ENCODE measurements at regions of chr9 and their contacts with region 1.

Region 1: DNA sequence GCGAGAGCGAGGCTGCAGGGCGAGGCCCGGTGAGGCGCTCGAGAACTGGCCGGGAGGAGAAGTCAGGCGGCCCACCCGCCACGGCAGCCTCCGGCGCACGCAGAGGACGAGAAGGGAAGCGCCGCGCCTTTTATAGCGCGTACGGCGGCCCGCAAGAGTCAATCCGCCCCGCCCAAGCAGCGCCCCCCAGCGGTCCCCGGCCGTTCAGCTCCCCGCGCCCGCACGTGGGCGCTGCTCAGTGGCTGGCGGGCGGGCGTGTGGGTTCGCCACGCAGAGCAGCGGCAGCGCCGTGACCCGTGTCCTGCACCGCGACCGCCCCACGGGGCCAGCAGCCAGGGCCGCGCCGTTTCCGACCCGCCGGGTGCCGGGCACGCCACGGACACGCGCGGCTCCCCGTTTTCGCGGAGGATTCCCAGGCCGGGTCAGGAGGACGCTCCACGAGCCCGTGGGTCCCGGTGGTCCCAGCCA is 14.6 kb downstream of the LCN10 start:
- DNase-seq: peak; percentile 80
- ATAC-seq: peak; percentile 6
- H3K4me3 Mint-ChIP-seq: peak overlapping the region; percentile 99; the same call in 1 of the 2 replicates
- H3K27ac Mint-ChIP-seq: no peak overlapping the region
- H3K4me1 Mint-ChIP-seq: peaks cover 21% of the 10 kb centered on the region
- H3K27me3 Mint-ChIP-seq: no peaks in the 10 kb centered on the region
- CTCF ChIP-seq: peak; percentile 84

Region 2: DNA sequence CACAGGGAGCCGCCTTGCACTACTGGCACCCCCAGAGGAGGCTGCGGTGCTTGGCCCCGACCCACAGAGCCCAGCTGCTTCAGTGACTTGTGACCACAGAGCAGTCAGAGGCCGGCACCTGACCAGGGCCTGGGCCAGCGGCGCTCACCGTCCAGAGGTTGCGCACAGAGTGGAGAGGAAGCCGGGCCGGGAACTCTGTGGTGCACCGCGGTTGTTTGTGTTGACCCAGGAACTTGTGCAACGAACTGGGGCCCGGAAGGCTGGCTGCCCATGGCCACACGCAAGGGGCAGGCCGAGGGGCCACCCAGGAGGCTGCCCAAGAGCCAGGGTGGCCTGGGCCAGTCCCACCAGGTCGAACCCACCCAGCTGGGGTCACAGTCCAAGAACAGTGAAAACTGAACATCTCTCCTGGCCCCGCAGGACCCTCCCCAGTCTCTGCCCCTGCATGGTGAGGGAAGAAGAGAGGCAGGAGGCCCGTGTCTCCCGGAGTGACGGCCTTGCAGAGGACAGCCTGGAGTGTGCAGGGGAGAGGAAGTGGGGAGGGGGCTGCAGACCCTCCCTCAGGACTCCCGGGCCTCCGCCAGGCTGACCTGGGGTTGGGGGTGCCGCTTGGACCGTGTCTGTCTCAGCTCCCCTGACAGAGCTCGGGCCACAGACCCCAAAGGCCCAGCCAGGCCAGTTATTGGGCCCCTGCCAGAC is 108.2 kb before region 1 on chr9:
- CTCF ChIA-PET with region 1: no interaction called
- POLR2A ChIA-PET with region 1: no interaction called
- DNase-seq: no peak
- ATAC-seq: no peak
- H3K4me3 Mint-ChIP-seq: no peak overlapping the region
- H3K27ac Mint-ChIP-seq: no peak overlapping the region
- H3K4me1 Mint-ChIP-seq: peaks cover 4% of the 10 kb centered on the region; the same call in 1 of the 2 replicates
- H3K27me3 Mint-ChIP-seq: no peaks in the 10 kb centered on the region
- CTCF ChIP-seq: no peak

Region 3: DNA sequence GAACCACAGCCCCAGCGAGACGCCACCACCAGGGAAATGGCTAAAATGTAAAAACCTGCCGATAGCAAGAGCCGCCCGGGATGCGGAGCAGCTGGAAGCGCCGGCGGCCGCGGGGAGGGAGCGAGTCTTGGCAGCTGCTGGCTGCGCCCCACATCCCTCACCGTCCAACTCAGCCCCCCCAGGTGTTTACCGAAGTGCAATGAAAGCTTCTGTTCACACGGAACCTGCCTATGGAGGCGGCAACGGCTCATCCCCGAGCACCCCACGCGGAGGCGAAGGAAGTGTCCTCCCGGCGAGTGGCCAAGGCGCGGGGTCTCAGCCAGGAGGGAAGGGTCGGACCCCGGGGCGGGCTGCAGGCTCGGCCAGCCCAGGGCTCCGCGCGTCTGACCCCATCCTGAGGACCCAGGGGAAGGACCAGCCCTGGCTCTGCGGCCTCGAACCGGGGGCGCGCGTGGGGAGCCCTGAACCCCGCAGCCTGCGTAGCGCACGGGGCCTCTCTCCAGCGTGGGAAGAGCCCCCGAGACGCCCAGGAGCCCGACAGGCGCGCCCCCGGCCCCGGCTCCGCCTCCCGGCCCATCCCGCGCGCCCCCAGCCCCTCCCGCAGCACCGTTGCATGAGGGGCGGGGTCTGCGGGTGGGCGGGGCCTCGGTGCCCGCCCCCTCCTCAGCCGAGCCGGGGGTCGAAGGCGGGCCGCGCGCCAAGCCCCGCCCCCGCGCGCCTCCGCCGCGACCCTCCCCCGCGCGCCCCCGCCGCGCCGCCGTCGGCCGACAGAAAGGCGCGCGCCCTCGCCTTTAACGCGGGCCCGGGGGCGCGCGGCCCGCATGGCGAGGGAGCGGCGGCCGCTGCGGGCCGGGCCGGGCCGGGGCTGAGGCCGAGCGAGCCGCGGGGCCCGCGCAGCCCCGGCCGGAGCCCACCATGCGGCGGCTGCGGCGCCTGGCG is 16.1 kb before region 1 on chr9 and contains the start of gene DIPK1B:
- CTCF ChIA-PET with region 1: interaction called, 12 read pairs
- POLR2A ChIA-PET with region 1: interaction called, 9 read pairs
- DNase-seq: peak; percentile 71
- ATAC-seq: peak; percentile 73
- H3K4me3 Mint-ChIP-seq: peak within 1 kb of the TSS; percentile 70
- H3K27ac Mint-ChIP-seq: no peak within 1 kb of the TSS
- H3K4me1 Mint-ChIP-seq: peaks cover 4% of the 10 kb centered on the region
- H3K27me3 Mint-ChIP-seq: peaks cover 15% of the 10 kb centered on the region
- CTCF ChIP-seq: no peak
- total RNA-seq, gene DIPK1B: 45.4 to 49.8 TPM (median 48.9 TPM) in 3 replicates

Region 4: GRCh38 chr9:136742591-136743391 is 14.7 kb after region 1 on chr9 and contains the start of gene LCN10:
- CTCF ChIA-PET with region 1: interaction called, 40 read pairs
- POLR2A ChIA-PET with region 1: no interaction called
- DNase-seq: peak; percentile 82
- ATAC-seq: peak; percentile 85
- H3K4me3 Mint-ChIP-seq: peak within 1 kb of the TSS; percentile 37
- H3K27ac Mint-ChIP-seq: no peak within 1 kb of the TSS
- H3K4me1 Mint-ChIP-seq: no peaks in the 10 kb centered on the region; the same call in none of the 2 replicates
- H3K27me3 Mint-ChIP-seq: no peaks in the 10 kb centered on the region
- CTCF ChIP-seq: no peak
- total RNA-seq, gene LCN10: 2.4 to 3.7 TPM (median 3.3 TPM) in 3 replicates

Region 5: DNA sequence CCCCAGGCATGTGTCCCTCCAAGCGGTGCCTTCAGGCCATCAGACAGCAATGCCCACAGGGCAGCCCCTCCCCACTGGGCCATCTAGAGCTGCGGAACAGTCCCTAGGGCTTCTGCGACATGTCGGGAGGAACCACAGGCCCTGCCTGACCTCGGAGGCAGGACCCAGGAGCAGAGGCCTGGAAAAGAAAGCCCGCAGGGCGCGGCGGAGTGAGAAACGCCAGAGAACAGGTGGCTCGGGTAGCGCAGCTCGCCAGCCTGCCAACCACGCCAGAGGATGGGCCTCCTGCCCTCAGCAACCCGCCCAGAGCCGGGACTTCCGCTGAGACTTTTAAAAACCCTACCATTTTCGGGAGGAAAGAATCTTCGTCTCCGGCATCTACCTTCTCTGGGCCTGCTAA is 29.2 kb after region 1 on chr9:
- CTCF ChIA-PET with region 1: interaction called, 31 read pairs
- POLR2A ChIA-PET with region 1: no interaction called
- DNase-seq: no peak
- ATAC-seq: no peak
- H3K4me3 Mint-ChIP-seq: no peak overlapping the region
- H3K27ac Mint-ChIP-seq: no peak overlapping the region
- H3K4me1 Mint-ChIP-seq: peaks cover 8% of the 10 kb centered on the region
- H3K27me3 Mint-ChIP-seq: no peaks in the 10 kb centered on the region; the same call in 1 of the 2 replicates
- CTCF ChIP-seq: no peak

Region 6: DNA sequence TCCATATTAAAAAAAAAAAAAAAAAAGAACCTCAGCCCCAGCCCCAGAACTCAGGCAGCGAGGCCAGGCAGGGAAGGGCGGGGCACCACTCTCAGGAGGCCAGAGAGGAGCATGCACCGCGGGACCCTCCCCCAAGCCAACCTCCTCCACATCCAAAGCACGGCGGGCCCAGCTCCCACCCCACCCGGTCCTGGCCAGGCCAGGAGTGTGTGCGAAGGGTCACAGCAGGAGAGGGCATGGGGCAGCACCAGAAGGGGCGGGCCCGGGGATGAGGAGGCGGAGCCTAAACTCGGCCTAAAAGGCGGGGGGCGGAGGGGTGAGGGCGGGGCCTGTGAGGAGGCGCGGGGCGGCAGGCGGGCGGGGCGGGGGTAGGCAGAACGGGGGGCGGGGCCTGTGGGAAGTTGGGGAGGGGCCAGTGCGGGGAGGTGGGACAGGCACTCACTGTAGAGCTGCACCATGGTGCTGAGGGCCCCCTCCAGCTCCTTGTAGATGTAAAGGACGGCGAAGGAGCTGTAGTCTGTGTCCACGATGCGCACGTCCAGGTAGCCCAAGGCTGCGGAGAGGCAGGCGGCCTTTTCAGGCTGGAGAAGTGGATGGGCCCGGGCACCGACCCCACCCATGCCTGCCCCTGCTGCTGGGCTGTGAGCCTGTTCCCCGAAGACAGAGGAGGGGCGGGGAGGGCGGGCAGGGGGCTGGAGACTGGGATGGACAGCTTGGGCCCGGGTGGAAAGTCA is 35.0 kb after region 1 on chr9:
- CTCF ChIA-PET with region 1: interaction called, 31 read pairs
- POLR2A ChIA-PET with region 1: no interaction called
- DNase-seq: peak; percentile 96
- ATAC-seq: peak; percentile 83
- H3K4me3 Mint-ChIP-seq: peak overlapping the region; percentile 67
- H3K27ac Mint-ChIP-seq: peak overlapping the region; percentile 80; the same call in 1 of the 2 replicates
- H3K4me1 Mint-ChIP-seq: peaks cover 11% of the 10 kb centered on the region
- H3K27me3 Mint-ChIP-seq: peaks cover 13% of the 10 kb centered on the region
- CTCF ChIP-seq: no peak

Region 7: GRCh38 chr9:136775191-136775590 is 47.1 kb after region 1 on chr9:
- CTCF ChIA-PET with region 1: no interaction called
- POLR2A ChIA-PET with region 1: no interaction called
- DNase-seq: no peak
- ATAC-seq: no peak
- H3K4me3 Mint-ChIP-seq: no peak overlapping the region
- H3K27ac Mint-ChIP-seq: no peak overlapping the region
- H3K4me1 Mint-ChIP-seq: peaks cover 5% of the 10 kb centered on the region; the same call in 1 of the 2 replicates
- H3K27me3 Mint-ChIP-seq: peaks cover 36% of the 10 kb centered on the region
- CTCF ChIP-seq: no peak

Region 8: GRCh38 chr9:136820971-136821825 is 93.1 kb after region 1 on chr9:
- CTCF ChIA-PET with region 1: no interaction called
- POLR2A ChIA-PET with region 1: interaction called, 10 read pairs
- DNase-seq: peak; percentile 47
- ATAC-seq: peak; percentile 73
- H3K4me3 Mint-ChIP-seq: peak overlapping the region; percentile 75
- H3K27ac Mint-ChIP-seq: peak overlapping the region; percentile 14; the same call in 1 of the 2 replicates
- H3K4me1 Mint-ChIP-seq: peaks cover 14% of the 10 kb centered on the region
- H3K27me3 Mint-ChIP-seq: no peaks in the 10 kb centered on the region
- CTCF ChIP-seq: no peak